Lower leg skin (tissue), 4 donors: ENCODE measurements at regions of chr15 and their contacts with region 1.

Region 1: GRCh38 chr15:72852273-72852672 is 68.7 kb upstream of the ADPGK start:
- DNase-seq: no peak
- H3K4me3 ChIP-seq: no peak overlapping the region
- CTCF ChIP-seq: no peak
- POLR2A ChIP-seq: no peak

Region 2: GRCh38 chr15:71547011-71547410 is 1305.3 kb before region 1 on chr15:
- intact Hi-C with region 1: loop called (anchors 5 kb)
- DNase-seq: no peak
- H3K4me3 ChIP-seq: peak overlapping the region; percentile 1
- CTCF ChIP-seq: no peak
- POLR2A ChIP-seq: no peak

Region 3: GRCh38 chr15:72923304-72923703 is 71.0 kb after region 1 on chr15:
- intact Hi-C with region 1: no loop called
- DNase-seq: no peak
- H3K4me3 ChIP-seq: no peak overlapping the region
- CTCF ChIP-seq: no peak
- POLR2A ChIP-seq: no peak

Region 4: GRCh38 chr15:73482166-73482565 is 629.9 kb after region 1 on chr15:
- intact Hi-C with region 1: no loop called
- DNase-seq: no peak
- H3K4me3 ChIP-seq: no peak overlapping the region
- CTCF ChIP-seq: no peak
- POLR2A ChIP-seq: no peak